WTC11 (cell line): ENCODE measurements at regions of chr17 and their contacts with region 1.

Region 1: DNA sequence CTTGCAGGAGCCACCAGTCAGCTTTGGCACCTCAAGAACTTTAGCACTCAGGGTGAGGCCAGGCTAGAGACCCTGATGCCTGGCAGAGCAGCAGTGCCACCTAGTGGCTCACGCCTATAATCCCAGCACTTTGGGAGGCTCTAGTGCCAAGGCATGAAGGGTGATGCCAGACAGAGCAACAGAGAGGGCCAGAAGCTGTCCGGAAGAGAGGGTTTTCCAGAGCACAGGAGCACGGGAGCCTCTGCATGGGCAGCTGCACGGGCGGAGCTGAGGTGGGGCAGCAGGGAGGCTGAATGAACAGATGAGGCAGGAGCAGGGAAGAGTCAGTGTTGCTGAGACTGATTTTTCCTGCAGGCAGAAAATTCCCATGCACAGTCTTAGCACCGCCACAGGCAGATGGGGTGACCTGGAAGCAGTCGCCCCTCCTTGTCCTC is 38.9 kb downstream of the MYH3 start:
- DNase-seq: peak; percentile 80
- ATAC-seq: peak; percentile 91
- H3K4me3 Mint-ChIP-seq: no peak overlapping the region
- H3K27ac Mint-ChIP-seq: no peak overlapping the region
- H3K4me1 Mint-ChIP-seq: peaks cover 14% of the 10 kb centered on the region
- H3K27me3 Mint-ChIP-seq: no peaks in the 10 kb centered on the region
- CTCF ChIP-seq: peak; percentile 78

Region 2: GRCh38 chr17:10295728-10296343 is 322.4 kb before region 1 on chr17:
- CTCF ChIA-PET with region 1: interaction called, 131 read pairs
- POLR2A ChIA-PET with region 1: no interaction called
- DNase-seq: peak; percentile 80
- ATAC-seq: peak; percentile 92
- H3K4me3 Mint-ChIP-seq: no peak overlapping the region
- H3K27ac Mint-ChIP-seq: no peak overlapping the region
- H3K4me1 Mint-ChIP-seq: peaks cover 12% of the 10 kb centered on the region
- H3K27me3 Mint-ChIP-seq: no peaks in the 10 kb centered on the region; the same call in 1 of the 2 replicates
- CTCF ChIP-seq: peak; percentile 52

Region 3: DNA sequence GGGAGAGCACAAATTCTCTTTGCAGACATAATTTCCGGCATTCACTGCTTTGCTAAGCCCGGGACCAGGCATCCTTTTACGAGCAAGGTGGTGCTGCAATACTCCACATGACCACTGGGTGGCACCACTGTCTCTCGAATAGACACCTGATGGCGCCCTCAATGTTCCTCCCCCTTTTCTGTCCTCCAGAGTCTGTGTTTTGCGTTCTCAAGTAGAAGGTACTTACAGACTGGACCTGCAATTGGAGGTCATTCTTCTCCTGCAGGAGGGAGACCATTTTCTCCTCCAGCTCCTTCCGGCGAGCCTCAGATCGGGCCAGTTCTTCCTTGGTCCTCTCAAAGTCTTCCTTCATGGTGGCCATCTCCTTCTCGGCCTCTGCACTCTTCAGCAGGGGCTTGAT is 290.6 kb before region 1 on chr17:
- CTCF ChIA-PET with region 1: interaction called, 74 read pairs
- POLR2A ChIA-PET with region 1: no interaction called
- DNase-seq: peak; percentile 94
- ATAC-seq: peak; percentile 90
- H3K4me3 Mint-ChIP-seq: no peak overlapping the region
- H3K27ac Mint-ChIP-seq: no peak overlapping the region
- H3K4me1 Mint-ChIP-seq: 0 out of 2 replicates have a peak, but pooled peaks cover 5% of the 10 kb centered on the region
- H3K27me3 Mint-ChIP-seq: no peaks in the 10 kb centered on the region; the same call in 1 of the 2 replicates
- CTCF ChIP-seq: peak; percentile 99

Region 4: DNA sequence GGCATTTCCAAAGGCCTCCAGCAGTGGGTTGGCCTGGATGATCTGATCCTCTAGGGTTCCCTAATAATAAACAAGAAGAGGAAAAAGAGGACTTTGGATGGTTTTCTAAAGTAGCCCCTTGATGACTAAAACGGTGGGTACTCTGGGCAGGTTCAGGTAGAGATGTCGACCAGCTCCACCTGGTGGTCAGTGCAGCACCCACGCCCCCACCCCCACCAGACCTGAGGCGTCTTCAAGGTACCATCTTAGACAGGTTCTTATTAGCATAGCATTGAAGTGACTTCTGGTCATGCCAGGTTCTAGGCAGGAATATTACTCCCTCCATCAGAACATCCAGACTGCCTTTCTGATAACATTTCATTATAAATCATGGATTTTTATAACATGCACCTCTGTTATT is 260.5 kb before region 1 on chr17:
- CTCF ChIA-PET with region 1: interaction called, 12 read pairs
- POLR2A ChIA-PET with region 1: no interaction called
- DNase-seq: peak; percentile 72
- ATAC-seq: peak; percentile 88
- H3K4me3 Mint-ChIP-seq: no peak overlapping the region
- H3K27ac Mint-ChIP-seq: no peak overlapping the region
- H3K4me1 Mint-ChIP-seq: 0 out of 2 replicates have a peak, but pooled peaks cover 2% of the 10 kb centered on the region
- H3K27me3 Mint-ChIP-seq: no peaks in the 10 kb centered on the region
- CTCF ChIP-seq: peak; percentile 58

Region 5: DNA sequence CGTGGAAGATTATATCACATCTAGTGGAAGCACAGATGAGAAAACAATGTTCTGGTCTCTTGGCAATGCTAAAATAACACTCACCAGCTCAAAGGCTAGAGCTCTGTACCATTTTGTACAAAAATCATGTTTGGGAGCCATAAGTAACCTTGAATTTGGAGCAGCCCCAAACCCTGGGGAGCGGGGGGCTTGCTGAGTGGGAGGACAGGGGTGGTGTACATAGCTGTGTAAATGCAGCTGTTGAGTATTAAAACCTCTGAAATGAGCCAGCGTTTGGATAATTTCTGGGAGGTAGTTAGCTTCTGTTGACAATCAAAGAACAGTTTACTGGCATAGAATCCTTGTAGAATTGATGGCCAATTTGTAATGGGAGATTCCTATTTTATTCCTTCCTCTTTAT is 200.8 kb before region 1 on chr17:
- CTCF ChIA-PET with region 1: interaction called, 25 read pairs
- POLR2A ChIA-PET with region 1: no interaction called
- DNase-seq: no peak
- ATAC-seq: no peak
- H3K4me3 Mint-ChIP-seq: no peak overlapping the region
- H3K27ac Mint-ChIP-seq: 0 out of 2 replicates have a peak overlapping the region, but pooled peaks have one; percentile 10
- H3K4me1 Mint-ChIP-seq: peaks cover 27% of the 10 kb centered on the region
- H3K27me3 Mint-ChIP-seq: no peaks in the 10 kb centered on the region
- CTCF ChIP-seq: no peak

Region 6: GRCh38 chr17:10646392-10646990 is 28.3 kb after region 1 on chr17:
- CTCF ChIA-PET with region 1: interaction called, 18 read pairs
- POLR2A ChIA-PET with region 1: no interaction called
- DNase-seq: peak; percentile 83
- ATAC-seq: peak; percentile 90
- H3K4me3 Mint-ChIP-seq: no peak overlapping the region
- H3K27ac Mint-ChIP-seq: no peak overlapping the region
- H3K4me1 Mint-ChIP-seq: no peaks in the 10 kb centered on the region
- H3K27me3 Mint-ChIP-seq: no peaks in the 10 kb centered on the region
- CTCF ChIP-seq: peak; percentile 67